Head of caudate nucleus (tissue), 42 donors: ENCODE measurements at regions of chr19 and their contacts with region 1.

Region 1: DNA sequence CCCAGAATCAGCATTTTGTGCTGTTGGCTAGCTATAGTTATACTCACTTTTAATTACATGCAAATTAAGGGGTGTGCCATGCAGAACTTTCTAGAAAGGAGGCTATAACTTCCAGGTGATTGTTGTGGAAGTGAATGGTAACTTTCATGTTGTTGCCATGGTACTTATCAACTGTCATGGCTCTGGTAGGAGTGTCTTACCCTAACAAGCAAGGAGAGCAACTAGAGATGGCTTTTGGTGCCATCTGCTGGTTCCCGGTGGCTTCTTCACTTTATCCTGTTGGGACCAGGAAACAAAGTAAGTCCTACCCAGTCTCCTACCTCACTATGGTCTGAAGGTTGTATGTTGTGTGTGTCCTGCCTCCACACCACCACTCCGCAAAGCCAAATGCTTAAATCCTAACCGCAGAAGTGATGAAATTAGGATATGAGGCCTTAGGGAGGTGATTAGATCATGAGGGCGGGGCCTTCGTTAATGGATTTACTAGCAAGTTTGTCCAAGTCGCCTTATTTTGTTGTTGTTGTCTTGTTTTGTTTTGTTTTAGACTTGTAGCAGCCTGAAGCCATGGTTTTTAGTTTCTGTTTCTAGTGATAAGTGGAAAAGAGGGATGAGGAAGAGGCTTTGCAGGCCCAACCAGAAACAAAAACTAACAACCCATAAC is 22.6 kb downstream of the FBXL12 start:
- DNase-seq: peak; percentile 46 to 94 (median 85)

Region 2: DNA sequence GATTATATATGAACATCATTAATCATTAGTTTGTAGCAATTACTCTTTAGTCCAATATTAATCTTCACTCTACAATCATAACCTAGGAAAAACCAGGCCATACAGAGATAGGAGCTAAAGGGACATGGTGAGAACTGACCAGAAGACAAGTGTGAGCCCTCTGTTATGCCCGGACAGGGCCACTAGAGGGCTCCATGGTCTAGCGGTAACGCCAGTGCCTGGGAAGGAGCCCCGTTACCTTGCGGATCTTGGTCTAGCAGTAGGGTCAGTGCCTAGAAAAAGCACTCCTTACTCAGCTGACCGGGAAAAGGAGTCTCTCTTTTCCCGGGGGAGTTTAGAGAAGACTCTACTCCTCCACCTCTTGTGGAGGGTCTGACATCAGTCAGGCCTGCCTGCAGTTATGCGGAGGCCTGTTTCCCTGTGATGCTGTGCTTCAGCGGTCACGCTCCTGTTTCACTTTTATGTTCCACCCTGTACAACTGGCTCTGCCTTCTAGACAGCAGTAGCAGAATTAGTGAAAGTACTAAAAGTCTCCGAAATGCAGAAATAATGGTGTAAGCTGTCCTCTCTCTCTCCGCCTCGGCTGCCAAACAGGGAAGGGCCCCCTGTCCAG is 590.6 kb before region 1 on chr19:
- intact Hi-C with region 1: loop called (anchors 10 kb)
- DNase-seq: peak; percentile 21 to 90 (median 75)

Region 3: GRCh38 chr19:9627856-9628255 is 168.4 kb before region 1 on chr19:
- intact Hi-C with region 1: loop called (anchors 5 kb)
- DNase-seq: no peak

Region 4: GRCh38 chr19:9818734-9819589 is 22.7 kb after region 1 on chr19 and contains the start of gene FBXL12:
- intact Hi-C with region 1: loop called (anchors 2 kb)
- DNase-seq: peak; percentile 98 to 100 (median 100)